HepG2 (cell line): ENCODE measurements at regions of chr3 and their contacts with region 1.

Region 1: DNA sequence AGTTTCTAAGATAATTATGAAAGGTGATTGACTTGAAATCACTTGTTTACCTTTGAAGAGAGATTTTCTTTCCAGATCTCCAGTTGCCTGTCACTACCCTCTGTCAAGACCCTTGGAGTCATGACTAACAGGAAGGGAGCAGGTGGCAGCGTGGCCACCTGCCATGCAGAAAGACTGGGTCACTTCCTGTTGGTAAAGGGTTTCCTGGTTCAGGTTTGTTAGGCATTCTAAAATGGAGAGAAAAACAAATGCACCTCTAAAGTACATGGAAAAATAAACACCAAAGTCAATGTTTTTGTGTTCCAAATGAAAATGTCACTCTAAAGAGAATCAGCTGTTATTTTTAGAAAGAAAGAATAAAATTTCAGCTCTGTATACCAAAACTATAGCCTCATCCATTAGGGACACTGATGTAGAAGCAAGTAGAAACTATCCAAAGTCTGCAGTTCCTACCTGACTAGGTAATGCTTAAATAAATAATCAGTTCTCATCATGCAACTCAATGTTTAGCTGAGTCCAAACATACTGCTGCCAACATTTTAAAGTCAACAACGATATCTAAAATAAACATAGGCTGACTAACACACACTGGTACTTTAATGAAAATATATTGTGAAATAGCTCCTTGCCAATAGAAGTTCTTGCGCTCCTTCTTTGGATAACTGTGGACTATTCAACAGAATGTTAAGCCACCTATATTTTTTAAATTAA is 23.9 kb upstream of the TM4SF1 start:
- DNase-seq: peak; percentile 97
- ATAC-seq: peak; percentile 98
- H3K4me3 ChIP-seq: peak overlapping the region in 2 of 3 experiments; percentile 4 to 36; a peak in 1 of 6 replicates
- H3K27ac ChIP-seq: peak overlapping the region; percentile 94
- H3K4me1 ChIP-seq: peaks cover 84% of the 10 kb centered on the region
- H3K27me3 ChIP-seq: no peaks in the 10 kb centered on the region
- CTCF ChIP-seq: no peak
- EP300 ChIP-seq: peak; percentile 91 to 99
- POLR2A ChIP-seq: no peak
- RAD21 ChIP-seq: no peak

Region 2: GRCh38 chr3:148981273-148981672 is 420.1 kb before region 1 on chr3:
- CTCF ChIA-PET with region 1: no interaction called
- POLR2A ChIA-PET with region 1: no interaction called
- in situ Hi-C with region 1: no loop called
- intact Hi-C with region 1: no loop called
- DNase-seq: peak; percentile 6
- ATAC-seq: peak; percentile 44; the same call in 2 of the 3 replicates
- H3K4me3 ChIP-seq: no peak overlapping the region
- H3K27ac ChIP-seq: no peak overlapping the region
- H3K4me1 ChIP-seq: no peaks in the 10 kb centered on the region
- H3K27me3 ChIP-seq: no peaks in the 10 kb centered on the region
- CTCF ChIP-seq: no peak
- EP300 ChIP-seq: no peak
- POLR2A ChIP-seq: no peak
- RAD21 ChIP-seq: no peak

Region 3: GRCh38 chr3:149291178-149291577 is 110.2 kb before region 1 on chr3:
- CTCF ChIA-PET with region 1: no interaction called
- POLR2A ChIA-PET with region 1: no interaction called
- in situ Hi-C with region 1: no loop called
- intact Hi-C with region 1: no loop called
- DNase-seq: peak; percentile 32
- ATAC-seq: peak; percentile 54
- H3K4me3 ChIP-seq: no peak overlapping the region
- H3K27ac ChIP-seq: no peak overlapping the region
- H3K4me1 ChIP-seq: no peaks in the 10 kb centered on the region
- H3K27me3 ChIP-seq: no peaks in the 10 kb centered on the region
- CTCF ChIP-seq: peak; percentile 60
- EP300 ChIP-seq: no peak
- POLR2A ChIP-seq: no peak
- RAD21 ChIP-seq: no peak

Region 4: DNA sequence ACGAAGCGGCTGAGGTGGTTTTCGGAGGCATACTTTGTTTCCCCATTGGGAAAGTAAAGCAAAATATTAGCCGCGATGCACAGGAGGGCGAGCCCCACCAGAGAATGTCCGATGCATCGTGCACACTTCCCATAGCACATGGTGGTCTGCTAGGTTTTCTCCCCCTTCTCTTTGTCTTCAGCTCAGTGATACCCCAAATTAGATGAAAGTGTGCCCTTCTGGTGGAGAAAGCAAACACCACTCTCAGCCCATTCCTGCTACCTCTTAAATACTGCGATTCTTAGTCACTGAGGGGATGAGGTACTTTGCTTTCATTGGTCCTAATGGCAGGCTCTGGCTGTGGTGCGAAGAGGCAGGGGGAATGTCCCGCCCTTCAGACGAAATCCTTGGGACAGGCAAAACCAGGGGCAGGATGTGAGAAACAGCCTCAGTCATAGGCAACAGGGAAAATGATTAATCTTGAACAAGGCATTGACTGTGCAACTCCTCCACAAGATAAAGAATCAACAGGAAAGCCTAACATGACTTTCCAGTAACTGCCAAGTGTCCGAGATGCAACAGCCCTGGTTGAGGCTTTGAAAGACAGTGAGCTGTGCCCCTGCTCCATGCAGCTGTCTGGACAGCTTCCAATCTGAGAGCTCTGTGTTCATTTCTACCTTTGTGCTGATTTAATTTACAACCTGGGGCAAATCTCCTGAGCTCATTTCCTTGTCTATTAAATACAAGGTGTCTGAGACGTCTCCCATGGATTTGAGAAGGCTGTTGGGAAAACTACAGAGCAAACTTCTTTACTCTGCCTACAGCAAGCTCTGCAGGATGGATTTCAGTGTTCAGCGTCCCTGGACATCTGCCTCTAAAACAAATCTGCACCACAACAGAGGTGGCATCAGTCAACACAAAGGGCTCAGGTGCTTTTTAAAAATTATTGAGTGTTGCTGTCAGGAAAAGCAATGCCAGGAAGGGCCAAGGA is 23.7 kb before region 1 on chr3 and contains the start of gene TM4SF1:
- CTCF ChIA-PET with region 1: no interaction called
- POLR2A ChIA-PET with region 1: interaction called, 73 read pairs
- in situ Hi-C with region 1: no loop called
- intact Hi-C with region 1: no loop called
- DNase-seq: peak; percentile 97
- ATAC-seq: peak; percentile 91
- H3K4me3 ChIP-seq: peak within 1 kb of the TSS; percentile 78 to 97 (median 82)
- H3K27ac ChIP-seq: peak within 1 kb of the TSS; percentile 92
- H3K4me1 ChIP-seq: peaks cover 61% of the 10 kb centered on the region
- H3K27me3 ChIP-seq: peaks cover 0 to 3% of the 10 kb centered on the region in 2 experiments; a peak in 1 of 5 replicates
- CTCF ChIP-seq: no peak
- EP300 ChIP-seq: peak; percentile 73 to 80; a peak in 3 of 4 replicates
- POLR2A ChIP-seq: peak; percentile 96 to 100
- RAD21 ChIP-seq: no peak; the same call in 1 of the 2 replicates
- total RNA-seq, gene TM4SF1: 226 and 431 TPM in 2 replicates

Region 5: DNA sequence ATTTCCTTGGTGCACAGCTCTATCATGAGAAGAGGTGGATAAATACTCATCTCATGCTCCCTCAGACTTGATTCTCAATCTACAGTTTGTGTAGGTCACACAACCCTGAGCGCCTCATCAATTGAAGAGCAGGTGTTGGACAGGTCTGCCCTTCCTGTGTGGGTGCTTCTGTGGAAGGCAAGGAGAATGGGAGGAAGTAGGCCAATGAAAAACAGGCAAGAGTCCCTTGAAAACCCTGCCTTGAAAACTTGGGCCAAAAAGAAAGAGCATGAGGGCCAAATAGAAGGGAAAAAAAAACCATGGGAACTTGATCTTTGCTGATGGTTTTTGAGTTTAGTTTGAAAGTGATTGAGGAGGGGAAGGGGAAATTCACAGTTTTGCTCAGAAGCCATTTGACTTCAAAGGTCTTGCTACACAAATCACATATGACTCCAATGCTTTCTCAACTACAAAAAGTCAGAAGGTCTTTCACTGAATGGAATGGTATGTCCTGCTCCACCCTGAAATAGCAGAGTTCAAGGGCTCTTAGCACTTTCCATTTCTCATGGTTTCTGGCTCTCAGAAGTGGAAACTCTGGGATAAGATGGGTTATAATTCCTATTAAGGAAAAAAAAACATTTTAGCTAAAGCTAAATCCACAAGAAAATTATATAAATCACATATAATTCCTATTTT is 13.3 kb after region 1 on chr3:
- CTCF ChIA-PET with region 1: no interaction called
- POLR2A ChIA-PET with region 1: interaction called, 10 read pairs
- in situ Hi-C with region 1: no loop called
- intact Hi-C with region 1: no loop called
- DNase-seq: peak; percentile 94
- ATAC-seq: peak; percentile 99
- H3K4me3 ChIP-seq: peak overlapping the region in 1 of 3 experiments; percentile 17; a peak in 1 of 6 replicates
- H3K27ac ChIP-seq: peak overlapping the region; percentile 83
- H3K4me1 ChIP-seq: peaks cover 23% of the 10 kb centered on the region
- H3K27me3 ChIP-seq: no peaks in the 10 kb centered on the region
- CTCF ChIP-seq: no peak
- EP300 ChIP-seq: peak in 1 of 2 experiments; percentile 91; a peak in 2 of 4 replicates
- POLR2A ChIP-seq: no peak
- RAD21 ChIP-seq: no peak